Right ventricle myocardium superior (tissue), 1 donor: ENCODE measurements at regions of chr11 and their contacts with region 1.

Region 1: GRCh38 chr11:73335204-73335923 is 27.3 kb downstream of the ARHGEF17 start:
- DNase-seq: peak; percentile 89
- ATAC-seq: peak; percentile 79

Region 2: GRCh38 chr11:73307323-73308002 is 27.9 kb before region 1 on chr11:
- intact Hi-C with region 1: loop called (anchors 1 kb)
- DNase-seq: peak; percentile 99
- ATAC-seq: peak; percentile 72

Region 3: DNA sequence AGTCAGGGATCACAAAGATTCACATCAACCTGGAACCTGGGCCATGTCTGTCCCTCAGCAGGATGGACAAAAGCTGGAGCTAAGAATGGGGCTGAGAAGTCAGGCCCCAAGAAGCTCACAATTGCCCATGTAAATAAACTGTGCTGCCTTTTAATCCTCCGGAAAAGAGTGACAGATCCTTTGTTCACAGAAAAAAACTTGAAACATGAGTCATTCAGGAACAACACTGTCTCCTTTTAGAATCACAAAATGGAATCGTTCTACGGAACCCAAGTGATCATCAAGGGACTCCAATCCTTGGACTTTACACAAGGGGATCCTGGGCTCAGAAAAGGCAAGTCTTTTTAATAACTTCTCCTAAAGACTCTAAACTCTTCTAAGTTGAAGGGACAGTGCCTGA is 76.9 kb after region 1 on chr11:
- intact Hi-C with region 1: no loop called
- DNase-seq: no peak
- ATAC-seq: no peak

Region 4: GRCh38 chr11:73597956-73598718 is 262.8 kb after region 1 on chr11 and contains the start of gene FAM168A:
- intact Hi-C with region 1: no loop called
- DNase-seq: peak; percentile 98
- ATAC-seq: peak; percentile 99
- total RNA-seq, gene FAM168A: 25.6 TPM